CD4-positive, alpha-beta T cell (primary cell): ENCODE measurements at regions of chr11 and their contacts with region 1.

Region 1: DNA sequence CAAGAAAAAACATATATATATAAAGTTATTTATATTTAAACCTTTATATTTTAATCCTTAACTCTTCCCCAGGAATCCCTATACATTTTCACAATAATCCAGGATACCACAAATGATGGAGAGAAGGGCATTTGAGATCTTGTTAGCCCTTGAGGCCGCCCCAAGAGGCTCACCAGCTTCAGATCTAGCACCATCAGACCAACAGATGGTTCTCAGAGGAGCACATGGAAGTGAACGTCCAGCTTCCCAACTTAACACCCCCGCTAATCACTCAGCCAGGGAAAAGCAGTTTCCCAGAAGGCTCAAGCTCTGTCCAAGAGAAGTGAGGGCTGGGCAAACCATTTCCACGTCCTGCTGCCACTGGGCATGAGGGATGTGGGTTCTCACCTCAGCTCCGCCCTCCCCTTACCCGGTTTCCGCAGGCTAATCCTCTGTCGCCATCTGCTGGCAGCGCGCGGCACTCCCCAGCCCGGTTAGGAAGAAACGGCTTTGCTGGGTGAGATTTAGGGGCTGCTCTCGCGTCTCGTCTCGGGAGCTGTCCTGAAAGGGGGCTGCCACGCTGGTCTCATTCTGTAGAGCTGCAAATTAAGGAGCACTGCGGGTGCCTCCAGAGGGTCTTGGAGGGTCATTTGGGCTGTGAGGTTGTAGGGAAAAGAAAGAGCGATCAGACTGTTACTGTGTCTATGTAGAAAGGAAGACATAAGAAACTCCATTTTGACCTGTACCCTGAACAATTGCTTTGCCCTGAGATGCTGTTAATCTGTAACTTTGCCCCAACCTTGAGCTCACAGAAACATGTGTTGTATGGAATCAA is 6.8 kb upstream of the FAM111A start:
- DNase-seq: peak; percentile 80 to 92 (median 87)
- ATAC-seq: peak; percentile 100
- H3K4me3 ChIP-seq: no peak overlapping the region
- H3K4me3 Mint-ChIP-seq: peak overlapping the region; percentile 75
- H3K27ac ChIP-seq: no peak overlapping the region
- H3K27ac Mint-ChIP-seq: no peak overlapping the region
- H3K4me1 ChIP-seq: peaks cover 7% of the 10 kb centered on the region
- H3K4me1 Mint-ChIP-seq: peaks cover 8% of the 10 kb centered on the region
- H3K27me3 ChIP-seq: no peaks in the 10 kb centered on the region
- H3K27me3 Mint-ChIP-seq: no peaks in the 10 kb centered on the region
- CTCF ChIP-seq: peak; percentile 98

Region 2: GRCh38 chr11:57567515-57568329 is 1568.1 kb before region 1 on chr11 and contains the start of gene UBE2L6:
- CTCF ChIA-PET with region 1: no interaction called
- POLR2A ChIA-PET with region 1: no interaction called
- intact Hi-C with region 1: loop called in 1 of 2 experiments (anchors 5 kb)
- DNase-seq: peak; percentile 35 to 94 (median 74)
- ATAC-seq: peak; percentile 76
- H3K4me3 ChIP-seq: peak within 1 kb of the TSS; percentile 95
- H3K4me3 Mint-ChIP-seq: peak within 1 kb of the TSS; percentile 100
- H3K27ac ChIP-seq: peak within 1 kb of the TSS; percentile 80 to 82
- H3K27ac Mint-ChIP-seq: peak within 1 kb of the TSS; percentile 92
- H3K4me1 ChIP-seq: peaks cover 33% of the 10 kb centered on the region
- H3K4me1 Mint-ChIP-seq: peaks cover 53% of the 10 kb centered on the region
- H3K27me3 ChIP-seq: no peaks in the 10 kb centered on the region
- H3K27me3 Mint-ChIP-seq: no peaks in the 10 kb centered on the region
- CTCF ChIP-seq: no peak
- total RNA-seq, gene UBE2L6: 35.0 to 36.2 TPM

Region 3: GRCh38 chr11:58900479-58901420 is 235.1 kb before region 1 on chr11:
- CTCF ChIA-PET with region 1: no interaction called
- POLR2A ChIA-PET with region 1: no interaction called
- intact Hi-C with region 1: no loop called
- DNase-seq: peak in 5 of 14 experiments; percentile 2 to 34 (median 9)
- ATAC-seq: no peak
- H3K4me3 ChIP-seq: no peak overlapping the region
- H3K4me3 Mint-ChIP-seq: no peak overlapping the region
- H3K27ac ChIP-seq: no peak overlapping the region
- H3K27ac Mint-ChIP-seq: no peak overlapping the region
- H3K4me1 ChIP-seq: no peaks in the 10 kb centered on the region
- H3K4me1 Mint-ChIP-seq: no peaks in the 10 kb centered on the region
- H3K27me3 ChIP-seq: peaks cover 20 to 28% of the 10 kb centered on the region in 2 experiments
- H3K27me3 Mint-ChIP-seq: peaks cover 55% of the 10 kb centered on the region
- CTCF ChIP-seq: peak; percentile 16

Region 4: DNA sequence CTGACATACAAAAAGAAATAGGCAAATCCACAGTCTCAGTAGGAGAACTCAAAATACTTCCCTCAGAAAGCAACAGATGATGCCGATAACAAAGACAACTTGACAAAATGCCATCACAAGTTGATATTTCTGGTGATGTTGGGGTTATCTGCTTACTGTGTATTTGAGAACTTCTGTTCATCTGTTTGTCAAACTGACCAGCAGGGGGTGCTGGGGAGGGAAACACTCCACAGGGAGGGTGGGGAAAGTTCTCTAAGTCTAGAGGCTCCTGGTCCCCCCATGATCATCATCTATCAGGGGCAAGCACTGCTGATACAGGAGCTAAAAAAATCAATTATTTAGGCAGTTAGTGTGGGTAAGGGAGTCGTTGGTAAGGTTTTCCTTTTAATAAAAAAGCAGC is 177.4 kb before region 1 on chr11:
- CTCF ChIA-PET with region 1: no interaction called
- POLR2A ChIA-PET with region 1: no interaction called
- intact Hi-C with region 1: loop called in 1 of 2 experiments (anchors 5 kb)
- DNase-seq: peak in 10 of 14 experiments; percentile 1 to 60 (median 12)
- ATAC-seq: no peak
- H3K4me3 ChIP-seq: no peak overlapping the region
- H3K4me3 Mint-ChIP-seq: no peak overlapping the region
- H3K27ac ChIP-seq: no peak overlapping the region
- H3K27ac Mint-ChIP-seq: no peak overlapping the region
- H3K4me1 ChIP-seq: no peaks in the 10 kb centered on the region
- H3K4me1 Mint-ChIP-seq: no peaks in the 10 kb centered on the region
- H3K27me3 ChIP-seq: no peaks in the 10 kb centered on the region
- H3K27me3 Mint-ChIP-seq: peaks cover 20% of the 10 kb centered on the region
- CTCF ChIP-seq: peak; percentile 25

Region 5: GRCh38 chr11:59097113-59097708 is 38.6 kb before region 1 on chr11:
- CTCF ChIA-PET with region 1: interaction called, 21 read pairs
- POLR2A ChIA-PET with region 1: interaction called, 4 read pairs
- intact Hi-C with region 1: loop called (anchors 1 kb)
- DNase-seq: peak; percentile 51 to 84 (median 60)
- ATAC-seq: peak; percentile 79
- H3K4me3 ChIP-seq: no peak overlapping the region
- H3K4me3 Mint-ChIP-seq: no peak overlapping the region
- H3K27ac ChIP-seq: no peak overlapping the region
- H3K27ac Mint-ChIP-seq: no peak overlapping the region
- H3K4me1 ChIP-seq: peaks cover 8% of the 10 kb centered on the region
- H3K4me1 Mint-ChIP-seq: peaks cover 8% of the 10 kb centered on the region
- H3K27me3 ChIP-seq: peaks cover 0 to 12% of the 10 kb centered on the region in 2 experiments
- H3K27me3 Mint-ChIP-seq: peaks cover 43% of the 10 kb centered on the region
- CTCF ChIP-seq: peak; percentile 76

Region 6: DNA sequence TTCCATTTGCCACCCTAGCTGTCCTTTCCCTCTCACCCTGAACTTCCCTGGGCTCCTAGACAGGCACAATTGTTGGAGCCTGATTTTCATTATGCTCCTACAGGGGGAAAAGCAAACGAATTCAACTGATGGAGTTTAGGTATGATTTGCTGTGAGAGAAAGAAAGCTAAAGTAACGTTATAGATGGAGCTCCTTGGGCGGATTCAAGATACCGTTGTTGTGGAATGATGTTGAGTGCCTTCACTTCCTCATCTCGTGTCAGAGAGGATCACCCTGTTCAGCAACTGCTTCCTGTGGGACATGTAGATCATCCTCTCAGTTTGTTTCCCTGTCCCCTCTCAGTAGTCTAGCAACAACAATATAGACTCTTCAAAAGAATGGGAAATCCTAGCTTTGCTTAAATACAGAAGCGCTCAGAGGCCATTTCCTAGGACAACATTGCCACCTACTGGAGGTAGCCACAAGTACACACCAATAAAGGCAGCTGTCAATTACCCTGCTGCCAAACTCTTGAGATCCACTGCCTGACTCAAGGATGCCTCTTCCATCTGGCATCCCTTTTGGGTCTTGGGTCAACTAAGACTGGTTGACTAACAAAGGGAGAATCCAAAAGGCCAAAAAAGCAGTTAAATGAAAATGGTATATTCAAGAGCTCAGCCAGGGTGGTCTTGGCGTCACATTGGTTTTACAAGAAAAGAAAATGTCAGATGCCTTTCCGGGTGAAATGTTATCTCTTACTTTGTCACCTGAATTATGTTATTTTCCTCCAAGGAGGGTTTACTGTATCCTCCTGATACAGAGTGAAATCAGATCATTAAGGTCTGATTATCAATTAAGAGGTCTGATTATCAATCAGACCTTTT is 22.6 kb after region 1 on chr11:
- CTCF ChIA-PET with region 1: interaction called, 87 read pairs
- POLR2A ChIA-PET with region 1: interaction called, 6 read pairs
- intact Hi-C with region 1: no loop called
- DNase-seq: peak; percentile 34 to 88 (median 48)
- ATAC-seq: peak; percentile 97
- H3K4me3 ChIP-seq: no peak overlapping the region
- H3K4me3 Mint-ChIP-seq: no peak overlapping the region
- H3K27ac ChIP-seq: no peak overlapping the region
- H3K27ac Mint-ChIP-seq: no peak overlapping the region
- H3K4me1 ChIP-seq: no peaks in the 10 kb centered on the region
- H3K4me1 Mint-ChIP-seq: peaks cover 9% of the 10 kb centered on the region
- H3K27me3 ChIP-seq: no peaks in the 10 kb centered on the region
- H3K27me3 Mint-ChIP-seq: peaks cover 9% of the 10 kb centered on the region
- CTCF ChIP-seq: peak; percentile 82